Psoas muscle (tissue), 8 donors: ENCODE measurements at regions of chr11 and their contacts with region 1.

Region 1: GRCh38 chr11:12319988-12320387 is 57.4 kb upstream of the PARVA start:
- DNase-seq: no peak
- ATAC-seq: no peak
- H3K4me3 ChIP-seq: no peak overlapping the region
- H3K27ac ChIP-seq: no peak overlapping the region
- H3K4me1 ChIP-seq: no peaks in the 10 kb centered on the region
- H3K27me3 ChIP-seq: no peaks in the 10 kb centered on the region
- CTCF ChIP-seq: no peak

Region 2: GRCh38 chr11:12137938-12138731 is 181.9 kb before region 1 on chr11:
- intact Hi-C with region 1: no loop called
- DNase-seq: no peak
- ATAC-seq: no peak
- H3K4me3 ChIP-seq: no peak overlapping the region
- H3K27ac ChIP-seq: peak overlapping the region; percentile 41
- H3K4me1 ChIP-seq: no peaks in the 10 kb centered on the region
- H3K27me3 ChIP-seq: no peaks in the 10 kb centered on the region
- CTCF ChIP-seq: no peak

Region 3: DNA sequence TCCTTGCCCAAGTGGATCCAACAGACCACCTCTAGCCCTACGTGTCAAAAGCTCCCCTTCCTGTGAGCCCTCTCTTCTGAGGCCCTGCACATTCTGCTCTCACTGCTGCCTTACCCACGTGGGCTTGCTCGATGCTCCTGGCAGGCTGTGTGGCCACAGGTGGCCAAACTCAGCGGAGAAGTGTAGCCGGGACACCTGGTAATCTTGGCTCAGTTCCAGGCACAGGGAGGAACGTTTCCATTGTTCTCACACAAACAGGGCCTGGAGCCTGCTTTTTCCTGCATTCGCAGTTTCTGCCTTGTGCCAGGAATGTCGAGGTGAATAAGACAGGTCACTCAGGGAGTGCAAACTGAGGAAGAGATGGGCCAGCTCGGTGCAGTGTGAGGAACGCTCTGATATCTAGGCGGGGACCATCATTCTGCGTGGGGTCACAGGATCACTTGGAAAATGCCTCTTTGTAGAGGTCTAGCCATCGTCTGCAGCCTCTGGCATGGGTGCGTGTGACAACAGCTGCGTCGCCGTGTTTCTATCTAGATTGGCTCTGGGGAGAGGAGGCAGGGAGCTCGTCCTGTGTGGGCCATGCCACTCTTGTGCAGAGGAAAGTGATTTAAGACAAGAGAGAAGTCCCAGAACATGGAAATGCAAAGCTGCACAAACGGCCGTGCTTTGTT is 70.3 kb before region 1 on chr11:
- intact Hi-C with region 1: no loop called
- DNase-seq: no peak
- ATAC-seq: no peak
- H3K4me3 ChIP-seq: no peak overlapping the region
- H3K27ac ChIP-seq: no peak overlapping the region
- H3K4me1 ChIP-seq: no peaks in the 10 kb centered on the region
- H3K27me3 ChIP-seq: peaks cover 0 to 4% (median 0%) of the 10 kb centered on the region in 3 donors
- CTCF ChIP-seq: no peak

Region 4: DNA sequence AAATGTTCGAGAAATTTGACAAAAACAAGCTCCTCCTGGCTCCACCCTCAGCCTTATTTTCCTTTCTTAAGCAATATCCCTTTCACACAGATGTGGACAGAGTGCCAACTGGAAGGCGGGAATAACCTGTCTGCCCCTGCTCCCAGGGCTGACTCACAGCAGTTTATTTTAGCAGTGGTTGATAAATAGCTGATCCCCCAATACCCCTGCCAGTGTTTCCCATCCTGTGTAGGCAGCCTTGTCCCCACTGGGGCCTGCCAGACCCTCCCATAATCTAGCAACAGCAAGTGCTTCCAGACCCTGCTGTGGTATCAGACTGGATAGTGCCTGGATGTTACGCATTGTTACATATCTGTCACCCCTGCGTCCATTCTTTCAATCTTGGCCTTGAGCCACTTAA is 111.0 kb after region 1 on chr11:
- intact Hi-C with region 1: no loop called
- DNase-seq: peak; percentile 59 to 67
- ATAC-seq: peak; percentile 62 to 87 (median 80)
- H3K4me3 ChIP-seq: no peak overlapping the region
- H3K27ac ChIP-seq: no peak overlapping the region
- H3K4me1 ChIP-seq: peaks cover 3% of the 10 kb centered on the region
- H3K27me3 ChIP-seq: no peaks in the 10 kb centered on the region
- CTCF ChIP-seq: no peak

Region 5: GRCh38 chr11:12680246-12680939 is 360.4 kb after region 1 on chr11:
- intact Hi-C with region 1: no loop called
- DNase-seq: peak; percentile 79 to 91
- ATAC-seq: peak; percentile 83 to 93 (median 88)
- H3K4me3 ChIP-seq: peak overlapping the region; percentile 83
- H3K27ac ChIP-seq: peak overlapping the region; percentile 96
- H3K4me1 ChIP-seq: peaks cover 87% of the 10 kb centered on the region
- H3K27me3 ChIP-seq: no peaks in the 10 kb centered on the region
- CTCF ChIP-seq: no peak

Region 6: DNA sequence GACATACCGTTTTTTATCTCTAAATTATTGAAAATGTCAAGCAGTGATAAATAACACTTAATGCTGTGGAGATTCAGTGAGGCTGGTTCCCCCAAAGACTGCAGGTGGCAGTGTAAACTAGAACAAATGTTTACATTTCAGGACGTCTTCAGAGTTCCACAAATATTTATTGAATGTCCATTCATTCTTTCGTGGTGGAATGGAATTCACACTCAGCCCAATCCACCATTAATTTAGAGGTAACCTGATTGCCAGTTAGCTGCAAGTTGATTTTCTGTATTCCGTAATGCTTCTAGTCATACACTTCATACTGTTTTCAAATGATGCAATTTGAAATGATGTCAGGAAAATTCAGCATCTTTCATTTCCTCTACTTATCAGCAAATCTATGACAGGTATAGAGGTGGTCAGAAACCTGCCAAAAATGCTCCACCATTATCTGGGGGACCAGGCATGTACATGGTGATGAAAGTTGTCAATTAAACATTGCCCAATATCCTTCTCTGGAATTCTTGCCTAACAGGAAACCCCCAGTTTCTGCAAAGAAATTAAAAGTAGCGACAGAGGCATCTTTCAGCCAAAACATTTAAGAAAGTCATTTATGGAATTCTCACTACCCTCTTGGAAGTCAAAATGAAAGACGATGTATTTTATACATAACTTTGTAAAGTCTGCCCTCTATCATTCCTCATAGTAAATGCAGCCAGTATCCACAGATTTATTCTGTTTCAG is 863.3 kb after region 1 on chr11:
- intact Hi-C with region 1: loop called in 1 of 2 experiments (anchors 10 kb)
- DNase-seq: no peak
- ATAC-seq: peak in 2 of 4 donors; percentile 48 to 63
- H3K4me3 ChIP-seq: no peak overlapping the region
- H3K27ac ChIP-seq: no peak overlapping the region
- H3K4me1 ChIP-seq: no peaks in the 10 kb centered on the region
- H3K27me3 ChIP-seq: no peaks in the 10 kb centered on the region
- CTCF ChIP-seq: peak; percentile 40